ENCODE measurements at regions of chr1 and their contacts with region 1.

Region 1: GRCh38 chr1:205335643-205336091 is 14.1 kb upstream of the NUAK2 start:
- DNase-seq: peak; percentile 97
- H3K4me3 Mint-ChIP-seq: no peak overlapping the region
- H3K27ac Mint-ChIP-seq: no peak overlapping the region
- H3K4me1 Mint-ChIP-seq: peaks cover 4% of the 10 kb centered on the region
- H3K27me3 Mint-ChIP-seq: peaks cover 17% of the 10 kb centered on the region
- CTCF ChIP-seq: peak; percentile 100

Region 2: DNA sequence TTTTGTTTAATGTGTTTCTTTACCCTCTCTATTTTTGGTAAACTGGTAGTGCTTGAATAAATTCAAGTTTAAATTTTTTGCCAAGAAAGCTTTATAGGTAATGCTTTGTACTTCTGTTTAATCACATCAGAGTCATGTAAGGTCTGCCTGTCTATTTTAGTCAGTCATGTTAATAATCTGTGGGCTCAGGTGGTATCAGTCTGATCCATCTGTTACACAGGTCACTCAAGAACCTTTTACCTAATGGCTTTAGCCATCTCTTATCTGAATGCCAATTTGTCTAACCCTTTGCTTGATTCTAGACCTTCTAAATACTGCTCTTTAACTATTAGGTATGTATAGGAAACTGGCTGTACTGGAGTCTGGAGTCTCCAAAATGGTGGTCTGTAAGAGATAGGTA is 802.8 kb before region 1 on chr1:
- CTCF ChIA-PET with region 1: no interaction called
- POLR2A ChIA-PET with region 1: no interaction called
- intact Hi-C with region 1: no loop called
- DNase-seq: no peak
- H3K4me3 Mint-ChIP-seq: no peak overlapping the region
- H3K27ac Mint-ChIP-seq: no peak overlapping the region
- H3K4me1 Mint-ChIP-seq: no peaks in the 10 kb centered on the region
- H3K27me3 Mint-ChIP-seq: no peaks in the 10 kb centered on the region
- CTCF ChIP-seq: no peak

Region 3: DNA sequence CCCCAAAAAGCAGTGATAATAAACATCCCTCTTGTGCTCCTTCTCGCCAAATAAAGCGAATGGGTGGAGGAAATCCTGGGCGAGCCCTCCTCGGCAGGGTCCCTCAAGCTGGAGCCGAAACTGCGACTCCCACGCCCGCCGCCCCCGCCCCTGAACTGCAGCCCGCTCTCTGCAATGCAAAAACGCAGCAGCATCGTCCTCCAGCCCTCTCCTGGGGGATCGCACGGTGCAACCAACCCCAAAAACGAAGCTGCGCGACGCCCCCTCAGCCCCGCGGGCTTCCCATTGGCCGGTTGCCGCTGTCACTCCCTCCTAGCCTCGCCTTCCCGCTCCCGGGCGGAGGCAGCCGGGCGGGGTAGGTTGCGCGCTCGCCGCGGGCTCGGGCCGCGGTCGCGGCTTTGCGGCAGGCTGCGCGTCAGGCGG is 108.1 kb before region 1 on chr1 and contains the start of gene TMCC2:
- CTCF ChIA-PET with region 1: interaction called, 13 read pairs
- POLR2A ChIA-PET with region 1: no interaction called
- intact Hi-C with region 1: no loop called
- DNase-seq: peak; percentile 91
- H3K4me3 Mint-ChIP-seq: peak within 1 kb of the TSS; percentile 63
- H3K27ac Mint-ChIP-seq: no peak within 1 kb of the TSS
- H3K4me1 Mint-ChIP-seq: peaks cover 20% of the 10 kb centered on the region
- H3K27me3 Mint-ChIP-seq: no peaks in the 10 kb centered on the region
- CTCF ChIP-seq: no peak
- total RNA-seq, gene TMCC2: 0.54 and 0.79 TPM in 2 replicates

Region 4: GRCh38 chr1:205321164-205321958 is 14.3 kb before region 1 on chr1 and contains the start of gene NUAK2:
- CTCF ChIA-PET with region 1: interaction called, 123 read pairs
- POLR2A ChIA-PET with region 1: interaction called, 6 read pairs
- intact Hi-C with region 1: no loop called
- DNase-seq: peak; percentile 97
- H3K4me3 Mint-ChIP-seq: peak within 1 kb of the TSS; percentile 99
- H3K27ac Mint-ChIP-seq: peak within 1 kb of the TSS; percentile 54
- H3K4me1 Mint-ChIP-seq: peaks cover 56% of the 10 kb centered on the region
- H3K27me3 Mint-ChIP-seq: no peaks in the 10 kb centered on the region
- CTCF ChIP-seq: peak; percentile 64
- total RNA-seq, gene NUAK2: 2.8 and 6.0 TPM in 2 replicates

Region 5: GRCh38 chr1:205375835-205376545 is 40.3 kb after region 1 on chr1:
- CTCF ChIA-PET with region 1: interaction called, 17 read pairs
- POLR2A ChIA-PET with region 1: interaction called, 3 read pairs
- intact Hi-C with region 1: no loop called
- DNase-seq: peak; percentile 90
- H3K4me3 Mint-ChIP-seq: no peak overlapping the region
- H3K27ac Mint-ChIP-seq: no peak overlapping the region
- H3K4me1 Mint-ChIP-seq: peaks cover 36% of the 10 kb centered on the region
- H3K27me3 Mint-ChIP-seq: no peaks in the 10 kb centered on the region
- CTCF ChIP-seq: no peak

Region 6: GRCh38 chr1:205440476-205441317 is 105.0 kb after region 1 on chr1:
- CTCF ChIA-PET with region 1: interaction called, 10 read pairs
- POLR2A ChIA-PET with region 1: no interaction called
- intact Hi-C with region 1: no loop called
- DNase-seq: peak; percentile 93
- H3K4me3 Mint-ChIP-seq: peak overlapping the region; percentile 1
- H3K27ac Mint-ChIP-seq: peak overlapping the region; percentile 77
- H3K4me1 Mint-ChIP-seq: peaks cover 25% of the 10 kb centered on the region
- H3K27me3 Mint-ChIP-seq: no peaks in the 10 kb centered on the region
- CTCF ChIP-seq: no peak

Region 7: GRCh38 chr1:205477759-205478247 is 142.1 kb after region 1 on chr1:
- CTCF ChIA-PET with region 1: interaction called, 138 read pairs
- POLR2A ChIA-PET with region 1: no interaction called
- intact Hi-C with region 1: no loop called
- DNase-seq: peak; percentile 100
- H3K4me3 Mint-ChIP-seq: no peak overlapping the region
- H3K27ac Mint-ChIP-seq: peak overlapping the region; percentile 33
- H3K4me1 Mint-ChIP-seq: peaks cover 15% of the 10 kb centered on the region
- H3K27me3 Mint-ChIP-seq: peaks cover 40% of the 10 kb centered on the region
- CTCF ChIP-seq: no peak

Region 8: GRCh38 chr1:205528887-205529825 is 193.5 kb after region 1 on chr1:
- CTCF ChIA-PET with region 1: interaction called, 230 read pairs
- POLR2A ChIA-PET with region 1: no interaction called
- intact Hi-C with region 1: loop called (anchors 1 kb)
- DNase-seq: peak; percentile 89
- H3K4me3 Mint-ChIP-seq: peak overlapping the region; percentile 32
- H3K27ac Mint-ChIP-seq: no peak overlapping the region
- H3K4me1 Mint-ChIP-seq: peaks cover 6% of the 10 kb centered on the region
- H3K27me3 Mint-ChIP-seq: no peaks in the 10 kb centered on the region
- CTCF ChIP-seq: peak; percentile 100

Region 9: GRCh38 chr1:205554026-205554811 is 218.6 kb after region 1 on chr1:
- CTCF ChIA-PET with region 1: no interaction called
- POLR2A ChIA-PET with region 1: no interaction called
- intact Hi-C with region 1: no loop called
- DNase-seq: no peak
- H3K4me3 Mint-ChIP-seq: no peak overlapping the region
- H3K27ac Mint-ChIP-seq: no peak overlapping the region
- H3K4me1 Mint-ChIP-seq: no peaks in the 10 kb centered on the region
- H3K27me3 Mint-ChIP-seq: peaks cover 93% of the 10 kb centered on the region
- CTCF ChIP-seq: no peak